Activated CD8-positive, alpha-beta T cell treated with anti-CD3 and anti-CD28 coated beads, Interleukin-2, amount 10 ng/mL, durations not matched to agents 7 days and 5 days (primary cell): ENCODE measurements at regions of chr11 and their contacts with region 1.

Region 1: GRCh38 chr11:102279641-102280170 is 37.6 kb upstream of the BIRC3 start:
- DNase-seq: no peak
- ATAC-seq: no peak
- H3K4me3 Mint-ChIP-seq: no peak overlapping the region
- H3K27ac Mint-ChIP-seq: no peak overlapping the region
- H3K4me1 Mint-ChIP-seq: peaks cover 10% of the 10 kb centered on the region
- H3K27me3 Mint-ChIP-seq: peaks cover 10% of the 10 kb centered on the region

Region 2: DNA sequence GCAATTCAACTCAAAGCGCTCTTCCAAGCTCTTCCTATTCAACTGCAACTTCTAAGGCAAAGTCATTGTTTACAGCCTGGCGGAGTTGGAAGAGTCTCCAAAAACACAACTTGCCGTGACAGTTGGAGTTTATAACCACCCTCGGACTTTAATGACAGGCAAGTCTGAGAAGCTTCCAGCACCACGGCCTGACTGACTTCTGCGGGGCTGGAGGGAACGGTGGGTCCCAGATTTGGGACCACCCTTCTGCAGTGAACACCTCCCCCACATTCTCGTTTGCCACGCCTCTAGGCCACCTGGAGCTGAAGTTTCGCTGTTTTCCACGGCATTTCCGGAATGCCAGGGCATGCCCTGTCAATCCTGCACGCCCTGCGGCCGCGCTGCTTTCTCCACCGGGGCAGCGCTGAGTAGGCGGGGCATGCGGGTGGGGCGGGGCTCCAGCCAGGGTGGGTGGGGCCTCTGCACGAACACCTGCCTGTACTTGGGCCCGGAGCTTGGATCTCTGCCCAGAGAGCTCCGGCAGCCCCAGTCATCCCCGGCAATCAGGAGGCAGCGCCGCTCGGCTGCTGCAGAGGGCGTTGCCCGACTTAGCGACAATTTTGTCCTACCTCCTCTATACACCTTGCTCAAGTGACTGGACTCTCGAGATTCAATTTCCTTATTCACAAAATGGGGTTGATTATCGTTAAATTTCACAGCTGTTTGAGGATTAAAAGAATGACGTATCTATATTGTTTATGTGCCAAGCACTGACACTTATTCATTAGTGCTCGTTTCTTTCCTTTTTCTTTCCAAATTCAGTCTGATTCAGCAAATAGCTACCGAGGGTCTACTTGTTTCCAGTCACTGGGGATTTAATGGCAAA is 11.1 kb before region 1 on chr11:
- CTCF ChIA-PET with region 1: interaction called, 21 read pairs
- POLR2A ChIA-PET with region 1: no interaction called
- DNase-seq: peak; percentile 76
- ATAC-seq: peak; percentile 99
- H3K4me3 Mint-ChIP-seq: peak overlapping the region; percentile 65
- H3K27ac Mint-ChIP-seq: no peak overlapping the region
- H3K4me1 Mint-ChIP-seq: peaks cover 19% of the 10 kb centered on the region
- H3K27me3 Mint-ChIP-seq: peaks cover 42% of the 10 kb centered on the region